IMR-90 (cell line): ENCODE measurements at regions of chr17 and their contacts with region 1.

Region 1: GRCh38 chr17:1186923-1187771 is 7.4 kb upstream of the ABR start:
- DNase-seq: peak; percentile 84
- ATAC-seq: peak; percentile 97
- H3K4me3 ChIP-seq: no peak overlapping the region
- H3K27ac ChIP-seq: no peak overlapping the region
- H3K4me1 ChIP-seq: peaks cover 6% of the 10 kb centered on the region
- H3K27me3 ChIP-seq: peaks cover 20% of the 10 kb centered on the region
- CTCF ChIP-seq: peak; percentile 98
- POLR2A ChIP-seq: 0 out of 2 replicates have a peak, but pooled peaks have one; percentile 35
- RAD21 ChIP-seq: peak; percentile 90

Region 2: GRCh38 chr17:1055751-1056645 is 131.1 kb before region 1 on chr17:
- CTCF ChIA-PET with region 1: no interaction called
- POLR2A ChIA-PET with region 1: no interaction called
- dilution Hi-C with region 1: no loop called
- in situ Hi-C with region 1: no loop called
- intact Hi-C with region 1: loop called (anchors 1 kb)
- DNase-seq: peak; percentile 59
- ATAC-seq: peak; percentile 84
- H3K4me3 ChIP-seq: no peak overlapping the region
- H3K27ac ChIP-seq: no peak overlapping the region
- H3K4me1 ChIP-seq: no peaks in the 10 kb centered on the region
- H3K27me3 ChIP-seq: no peaks in the 10 kb centered on the region
- CTCF ChIP-seq: peak; percentile 68
- POLR2A ChIP-seq: no peak
- RAD21 ChIP-seq: peak; percentile 73

Region 3: DNA sequence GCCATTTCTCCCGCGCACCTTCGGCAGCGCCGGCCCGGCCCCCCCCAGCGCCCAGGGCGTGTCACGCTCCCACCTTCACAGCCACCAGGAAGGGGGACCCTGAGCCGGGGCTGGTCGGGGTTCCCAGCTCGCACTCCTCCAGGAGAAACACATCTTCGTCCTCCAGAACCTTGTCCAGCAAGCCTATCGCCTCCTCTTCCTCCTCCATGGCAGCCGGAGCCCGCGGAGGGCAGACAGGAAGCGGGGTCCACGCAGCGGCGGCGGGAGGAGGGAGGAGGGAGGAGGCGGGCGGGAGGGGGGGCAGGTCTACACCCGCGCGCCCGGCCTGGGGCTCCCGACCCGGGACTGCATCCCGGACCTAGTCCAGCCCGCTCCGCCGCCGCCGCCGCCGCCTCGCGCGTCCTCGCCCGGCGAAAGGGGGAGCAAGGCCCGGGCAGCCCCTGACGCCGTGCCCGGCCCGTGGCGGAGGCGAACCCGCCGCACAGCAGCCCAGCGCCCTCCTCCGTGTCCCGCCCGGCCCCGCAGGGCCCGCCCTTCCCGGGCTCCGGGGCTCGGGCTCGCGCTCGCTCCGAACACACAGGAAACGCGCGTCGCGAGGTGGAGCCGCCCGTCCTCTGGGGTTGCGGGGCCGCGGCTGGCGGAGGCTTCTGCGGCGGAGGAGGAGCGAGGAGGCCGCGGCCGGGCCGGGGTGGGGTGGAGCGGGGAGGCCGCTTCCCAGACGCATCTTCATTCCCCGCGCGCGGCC is 78.1 kb before region 1 on chr17:
- CTCF ChIA-PET with region 1: no interaction called
- POLR2A ChIA-PET with region 1: no interaction called
- dilution Hi-C with region 1: no loop called
- in situ Hi-C with region 1: no loop called
- intact Hi-C with region 1: loop called (anchors 2 kb)
- DNase-seq: peak; percentile 44
- ATAC-seq: peak; percentile 75
- H3K4me3 ChIP-seq: peak overlapping the region; percentile 60
- H3K27ac ChIP-seq: peak overlapping the region; percentile 91
- H3K4me1 ChIP-seq: peaks cover 28% of the 10 kb centered on the region
- H3K27me3 ChIP-seq: no peaks in the 10 kb centered on the region
- CTCF ChIP-seq: no peak
- POLR2A ChIP-seq: 0 out of 2 replicates have a peak, but pooled peaks have one; percentile 38
- RAD21 ChIP-seq: no peak

Region 4: GRCh38 chr17:1122533-1123392 is 64.4 kb before region 1 on chr17:
- CTCF ChIA-PET with region 1: interaction called, 11 read pairs
- POLR2A ChIA-PET with region 1: no interaction called
- dilution Hi-C with region 1: no loop called
- in situ Hi-C with region 1: no loop called
- intact Hi-C with region 1: loop called (anchors 1 kb)
- DNase-seq: peak; percentile 58
- ATAC-seq: peak; percentile 99
- H3K4me3 ChIP-seq: no peak overlapping the region
- H3K27ac ChIP-seq: no peak overlapping the region
- H3K4me1 ChIP-seq: no peaks in the 10 kb centered on the region; the same call in 1 of the 2 replicates
- H3K27me3 ChIP-seq: no peaks in the 10 kb centered on the region
- CTCF ChIP-seq: peak; percentile 92
- POLR2A ChIP-seq: no peak
- RAD21 ChIP-seq: peak; percentile 95

Region 5: DNA sequence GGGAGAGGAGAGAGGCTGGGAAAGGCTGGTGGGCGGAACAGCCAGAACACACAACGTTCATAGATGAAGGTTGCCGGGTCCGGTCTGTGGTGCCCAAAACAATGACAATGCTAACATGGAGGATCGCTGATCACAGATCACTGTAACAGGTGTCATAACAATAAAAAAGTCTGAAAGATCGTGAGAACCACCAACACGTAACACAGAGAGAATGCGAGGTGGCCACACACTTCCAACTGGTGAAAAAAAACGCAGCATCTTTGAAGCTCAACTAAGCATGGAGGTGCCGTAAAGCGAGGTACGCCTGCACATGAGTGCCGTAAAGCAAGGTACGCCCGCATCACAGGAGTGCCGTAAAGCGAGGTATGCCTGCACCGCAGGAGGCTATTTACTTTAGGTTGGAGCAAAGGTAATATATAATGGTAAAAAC is 49.7 kb before region 1 on chr17:
- CTCF ChIA-PET with region 1: interaction called, 5 read pairs
- POLR2A ChIA-PET with region 1: no interaction called
- dilution Hi-C with region 1: no loop called
- in situ Hi-C with region 1: loop called (anchors 5 kb)
- intact Hi-C with region 1: loop called (anchors 5 kb)
- DNase-seq: no peak
- ATAC-seq: no peak
- H3K4me3 ChIP-seq: no peak overlapping the region
- H3K27ac ChIP-seq: no peak overlapping the region
- H3K4me1 ChIP-seq: peaks cover 5% of the 10 kb centered on the region
- H3K27me3 ChIP-seq: 0 out of 2 replicates have a peak, but pooled peaks cover 2% of the 10 kb centered on the region
- CTCF ChIP-seq: no peak
- POLR2A ChIP-seq: no peak
- RAD21 ChIP-seq: no peak

Region 6: GRCh38 chr17:1143573-1143972 is 43.6 kb before region 1 on chr17:
- CTCF ChIA-PET with region 1: interaction called, 5 read pairs
- POLR2A ChIA-PET with region 1: no interaction called
- dilution Hi-C with region 1: no loop called
- in situ Hi-C with region 1: loop called (anchors 5 kb)
- intact Hi-C with region 1: loop called (anchors 5 kb)
- DNase-seq: peak; percentile 34
- ATAC-seq: no peak
- H3K4me3 ChIP-seq: no peak overlapping the region
- H3K27ac ChIP-seq: no peak overlapping the region
- H3K4me1 ChIP-seq: peaks cover 4% of the 10 kb centered on the region
- H3K27me3 ChIP-seq: peaks cover 2% of the 10 kb centered on the region; the same call in 1 of the 2 replicates
- CTCF ChIP-seq: no peak
- POLR2A ChIP-seq: no peak
- RAD21 ChIP-seq: no peak

Region 7: DNA sequence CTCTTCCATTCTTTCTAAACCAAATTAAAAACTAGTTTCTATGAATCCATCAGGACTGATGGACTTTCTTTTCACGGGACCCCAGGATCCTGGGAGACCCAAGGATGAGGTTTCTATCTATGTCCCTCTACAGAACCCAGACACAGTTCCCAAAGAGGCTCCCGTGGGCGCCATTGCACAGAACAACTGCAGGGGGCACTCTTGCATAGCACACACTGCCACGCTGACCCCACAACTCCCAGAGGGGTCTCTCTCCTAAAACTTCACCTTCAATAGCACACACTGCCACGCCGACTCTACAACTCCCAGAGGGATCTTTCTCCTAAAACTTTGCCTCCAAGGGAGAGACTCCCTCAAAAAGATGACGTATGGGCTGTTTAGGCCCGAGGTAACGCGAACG is 16.4 kb before region 1 on chr17:
- CTCF ChIA-PET with region 1: no interaction called
- POLR2A ChIA-PET with region 1: no interaction called
- dilution Hi-C with region 1: no loop called
- in situ Hi-C with region 1: no loop called
- intact Hi-C with region 1: no loop called
- DNase-seq: no peak
- ATAC-seq: no peak
- H3K4me3 ChIP-seq: no peak overlapping the region
- H3K27ac ChIP-seq: no peak overlapping the region
- H3K4me1 ChIP-seq: no peaks in the 10 kb centered on the region
- H3K27me3 ChIP-seq: no peaks in the 10 kb centered on the region
- CTCF ChIP-seq: peak; percentile 24; the same call in 1 of the 2 replicates
- POLR2A ChIP-seq: no peak
- RAD21 ChIP-seq: no peak